IMR-90 (cell line): ENCODE measurements at regions of chr2 and their contacts with region 1.

Region 1: GRCh38 chr2:226758921-226759640 is 40.5 kb downstream of the IRS1 start:
- DNase-seq: peak; percentile 87
- ATAC-seq: peak; percentile 24
- H3K4me3 ChIP-seq: no peak overlapping the region
- H3K27ac ChIP-seq: peak overlapping the region; percentile 96
- H3K4me1 ChIP-seq: peaks cover 28% of the 10 kb centered on the region
- H3K27me3 ChIP-seq: no peaks in the 10 kb centered on the region
- CTCF ChIP-seq: no peak
- POLR2A ChIP-seq: no peak
- RAD21 ChIP-seq: no peak

Region 2: DNA sequence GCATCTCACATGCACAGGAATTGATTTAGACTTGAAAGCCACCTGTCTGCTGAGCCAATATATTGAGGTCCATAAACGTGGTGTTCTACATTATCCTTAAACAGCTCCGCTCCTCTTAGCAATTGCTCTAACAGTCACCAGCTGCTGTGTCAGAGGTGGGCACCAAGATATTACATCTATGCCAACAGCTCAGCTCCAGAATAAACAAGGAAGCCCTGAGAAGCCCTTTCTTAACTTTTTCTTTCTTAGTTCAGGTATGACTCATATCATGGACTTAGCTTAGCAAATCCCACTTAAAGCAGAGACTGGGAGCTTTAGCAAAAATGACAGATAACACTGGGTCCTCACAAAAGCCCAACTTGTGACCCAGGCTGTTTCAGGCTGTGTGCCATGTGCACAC is 396.1 kb before region 1 on chr2:
- CTCF ChIA-PET with region 1: no interaction called
- POLR2A ChIA-PET with region 1: no interaction called
- dilution Hi-C with region 1: no loop called
- in situ Hi-C with region 1: no loop called
- intact Hi-C with region 1: no loop called
- DNase-seq: peak; percentile 80
- ATAC-seq: peak; percentile 88
- H3K4me3 ChIP-seq: no peak overlapping the region
- H3K27ac ChIP-seq: no peak overlapping the region
- H3K4me1 ChIP-seq: peaks cover 6% of the 10 kb centered on the region
- H3K27me3 ChIP-seq: no peaks in the 10 kb centered on the region
- CTCF ChIP-seq: no peak
- POLR2A ChIP-seq: no peak
- RAD21 ChIP-seq: no peak

Region 3: DNA sequence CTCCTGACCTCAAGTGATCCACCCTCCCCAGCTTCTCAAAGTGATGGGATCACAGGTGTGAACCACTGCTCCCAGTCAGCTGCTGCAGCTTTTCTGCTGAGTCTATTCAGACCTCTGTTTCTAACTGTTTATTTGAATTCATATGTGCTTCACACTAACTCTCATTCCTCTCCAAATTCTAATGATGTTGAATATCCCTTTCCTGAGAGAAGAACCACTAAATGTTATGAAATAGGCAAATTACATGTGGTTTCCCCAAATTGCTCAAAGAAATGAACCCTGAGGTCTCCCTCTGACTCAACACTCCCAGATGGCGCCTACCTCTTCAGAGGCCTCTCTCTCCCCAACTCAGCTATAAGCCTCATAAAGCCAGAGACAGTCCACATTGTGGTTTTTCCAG is 58.0 kb before region 1 on chr2:
- CTCF ChIA-PET with region 1: no interaction called
- POLR2A ChIA-PET with region 1: no interaction called
- dilution Hi-C with region 1: no loop called
- in situ Hi-C with region 1: no loop called
- intact Hi-C with region 1: no loop called
- DNase-seq: peak; percentile 98
- ATAC-seq: peak; percentile 92
- H3K4me3 ChIP-seq: no peak overlapping the region
- H3K27ac ChIP-seq: no peak overlapping the region
- H3K4me1 ChIP-seq: peaks cover 2% of the 10 kb centered on the region
- H3K27me3 ChIP-seq: no peaks in the 10 kb centered on the region
- CTCF ChIP-seq: no peak
- POLR2A ChIP-seq: no peak
- RAD21 ChIP-seq: no peak

Region 4: GRCh38 chr2:226777611-226778010 is 18.5 kb after region 1 on chr2:
- CTCF ChIA-PET with region 1: interaction called, 3 read pairs
- POLR2A ChIA-PET with region 1: interaction called, 3 read pairs
- dilution Hi-C with region 1: no loop called
- in situ Hi-C with region 1: no loop called
- intact Hi-C with region 1: loop called (anchors 2 kb)
- DNase-seq: no peak
- ATAC-seq: no peak
- H3K4me3 ChIP-seq: no peak overlapping the region
- H3K27ac ChIP-seq: no peak overlapping the region
- H3K4me1 ChIP-seq: peaks cover 19% of the 10 kb centered on the region
- H3K27me3 ChIP-seq: no peaks in the 10 kb centered on the region
- CTCF ChIP-seq: no peak
- POLR2A ChIP-seq: no peak
- RAD21 ChIP-seq: no peak

Region 5: GRCh38 chr2:226845386-226846116 is 86.5 kb after region 1 on chr2:
- CTCF ChIA-PET with region 1: no interaction called
- POLR2A ChIA-PET with region 1: no interaction called
- dilution Hi-C with region 1: no loop called
- in situ Hi-C with region 1: no loop called
- intact Hi-C with region 1: no loop called
- DNase-seq: no peak
- ATAC-seq: no peak
- H3K4me3 ChIP-seq: no peak overlapping the region
- H3K27ac ChIP-seq: no peak overlapping the region
- H3K4me1 ChIP-seq: no peaks in the 10 kb centered on the region
- H3K27me3 ChIP-seq: no peaks in the 10 kb centered on the region
- CTCF ChIP-seq: no peak
- POLR2A ChIP-seq: no peak
- RAD21 ChIP-seq: no peak

Region 6: DNA sequence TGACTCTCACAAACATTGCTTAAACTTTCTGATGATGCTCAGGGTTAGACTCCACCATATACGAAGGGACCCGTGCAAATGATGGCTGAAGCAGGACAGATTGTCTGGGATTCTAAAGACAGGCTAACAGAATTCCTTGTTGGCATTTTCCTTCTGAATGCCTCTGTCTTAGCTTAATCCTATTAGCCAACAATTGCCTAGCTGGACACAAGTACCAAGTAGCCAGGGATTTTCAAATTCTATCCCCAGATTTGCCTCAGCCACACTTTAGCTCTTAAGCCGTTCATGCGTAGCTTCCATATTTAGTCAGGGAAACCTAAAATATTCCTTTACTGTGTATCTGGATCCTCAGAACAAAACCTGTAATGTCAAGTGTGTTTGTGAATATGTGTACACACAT is 445.4 kb after region 1 on chr2:
- CTCF ChIA-PET with region 1: no interaction called
- POLR2A ChIA-PET with region 1: no interaction called
- dilution Hi-C with region 1: no loop called
- in situ Hi-C with region 1: no loop called
- intact Hi-C with region 1: no loop called
- DNase-seq: no peak
- ATAC-seq: no peak
- H3K4me3 ChIP-seq: no peak overlapping the region
- H3K27ac ChIP-seq: no peak overlapping the region
- H3K4me1 ChIP-seq: no peaks in the 10 kb centered on the region
- H3K27me3 ChIP-seq: peaks cover 5% of the 10 kb centered on the region
- CTCF ChIP-seq: no peak
- POLR2A ChIP-seq: no peak
- RAD21 ChIP-seq: no peak